H1 (cell line): ENCODE measurements at regions of chr6 and their contacts with region 1.

Region 1: GRCh38 chr6:129598244-129599187 is 111.5 kb downstream of the ARHGAP18 start:
- DNase-seq: no peak
- H3K4me3 ChIP-seq: no peak overlapping the region
- H3K27ac ChIP-seq: no peak overlapping the region
- H3K4me1 ChIP-seq: peaks cover 0 to 3% (median 0%) of the 10 kb centered on the region in 4 experiments; a peak in 1 of 7 replicates
- H3K27me3 ChIP-seq: no peaks in the 10 kb centered on the region
- CTCF ChIP-seq: peak in 2 of 3 experiments; percentile 68 to 72; a peak in 3 of 4 replicates
- EP300 ChIP-seq: no peak
- POLR2A ChIP-seq: no peak
- RAD21 ChIP-seq: peak; percentile 95 to 96

Region 2: GRCh38 chr6:129744201-129744879 is 145.8 kb after region 1 on chr6:
- CTCF ChIA-PET with region 1: interaction called, 10 read pairs
- POLR2A ChIA-PET with region 1: no interaction called
- DNase-seq: no peak
- H3K4me3 ChIP-seq: no peak overlapping the region
- H3K27ac ChIP-seq: no peak overlapping the region
- H3K4me1 ChIP-seq: no peaks in the 10 kb centered on the region
- H3K27me3 ChIP-seq: no peaks in the 10 kb centered on the region
- CTCF ChIP-seq: no peak
- EP300 ChIP-seq: no peak
- POLR2A ChIP-seq: no peak
- RAD21 ChIP-seq: no peak

Region 3: GRCh38 chr6:129938249-129939020 is 339.9 kb after region 1 on chr6:
- CTCF ChIA-PET with region 1: interaction called, 10 read pairs
- POLR2A ChIA-PET with region 1: no interaction called
- DNase-seq: no peak
- H3K4me3 ChIP-seq: no peak overlapping the region
- H3K27ac ChIP-seq: no peak overlapping the region
- H3K4me1 ChIP-seq: no peaks in the 10 kb centered on the region
- H3K27me3 ChIP-seq: no peaks in the 10 kb centered on the region
- CTCF ChIP-seq: no peak
- EP300 ChIP-seq: no peak
- POLR2A ChIP-seq: no peak
- RAD21 ChIP-seq: no peak

Region 4: DNA sequence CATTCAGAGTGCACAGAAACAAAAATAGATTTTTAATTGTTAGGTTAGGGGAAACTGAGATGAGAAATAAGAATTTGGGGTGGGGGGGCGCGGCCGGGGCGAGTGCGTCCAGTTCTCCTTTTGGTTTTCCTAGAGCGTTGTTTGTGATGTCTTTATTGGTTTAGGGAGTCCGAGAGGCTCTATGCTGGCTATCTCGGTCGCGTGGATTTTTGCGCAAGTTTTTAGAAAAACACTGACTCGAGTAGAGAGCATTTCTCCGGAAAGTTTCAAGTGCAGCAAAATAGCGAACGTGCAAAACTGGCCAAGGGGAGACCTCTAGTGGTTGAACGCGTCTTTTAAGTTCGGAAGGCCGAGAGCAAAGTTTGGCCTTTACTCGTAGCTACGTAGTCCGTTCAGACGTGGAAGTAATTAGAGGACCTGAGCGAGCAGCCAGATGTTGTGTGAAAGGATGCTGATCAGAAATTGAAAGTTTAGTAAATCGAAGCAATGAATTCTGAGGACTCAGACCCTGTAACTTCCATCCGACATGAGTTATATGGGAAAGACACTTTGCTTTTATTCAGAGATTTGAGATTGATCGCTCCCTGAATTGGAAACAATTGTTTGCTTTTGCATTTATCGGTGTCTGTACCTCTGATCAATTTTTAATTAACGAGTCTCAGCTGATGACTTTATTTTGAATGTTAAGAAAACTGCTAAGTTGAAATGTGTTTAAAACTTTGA is 422.6 kb after region 1 on chr6:
- CTCF ChIA-PET with region 1: interaction called, 14 read pairs
- POLR2A ChIA-PET with region 1: no interaction called
- DNase-seq: peak; percentile 51 to 82
- H3K4me3 ChIP-seq: peak overlapping the region; percentile 51 to 81 (median 62)
- H3K27ac ChIP-seq: no peak overlapping the region
- H3K4me1 ChIP-seq: peaks cover 0 to 7% (median 4%) of the 10 kb centered on the region in 4 experiments; a peak in 4 of 7 replicates
- H3K27me3 ChIP-seq: no peaks in the 10 kb centered on the region; a peak in 2 of 7 replicates
- CTCF ChIP-seq: peak; percentile 58 to 80 (median 75)
- EP300 ChIP-seq: no peak
- POLR2A ChIP-seq: no peak
- RAD21 ChIP-seq: peak; percentile 87 to 88